CD8-positive, alpha-beta T cell (primary cell): ENCODE measurements at regions of chr1 and their contacts with region 1.

Region 1: DNA sequence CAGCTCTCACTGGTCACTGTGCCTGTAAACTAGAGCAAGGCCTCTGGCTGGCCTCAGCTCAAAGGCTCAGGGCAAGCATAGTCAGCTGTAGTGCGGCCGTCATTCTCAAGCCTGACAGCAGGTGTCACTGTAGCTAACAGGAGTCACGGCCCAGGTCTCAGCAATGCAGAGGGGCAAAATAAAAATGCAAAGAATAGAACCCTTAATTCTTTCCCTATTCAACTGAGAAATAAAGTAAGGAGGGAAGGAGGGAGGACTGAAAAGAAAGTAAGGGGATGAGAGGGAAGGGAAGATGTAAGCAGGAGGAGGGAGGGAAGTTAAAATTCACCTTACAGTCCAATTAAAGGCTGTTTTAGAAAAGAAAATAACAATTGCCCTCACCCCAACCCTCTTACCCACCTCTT is 106.1 kb downstream of the KIAA0319L start:
- DNase-seq: peak; percentile 62 to 85 (median 79)
- ATAC-seq: peak; percentile 94
- H3K4me3 ChIP-seq: no peak overlapping the region
- H3K4me3 Mint-ChIP-seq: no peak overlapping the region
- H3K27ac ChIP-seq: no peak overlapping the region
- H3K27ac Mint-ChIP-seq: peak overlapping the region; percentile 85
- H3K4me1 ChIP-seq: peaks cover 14% of the 10 kb centered on the region
- H3K4me1 Mint-ChIP-seq: peaks cover 27% of the 10 kb centered on the region
- H3K27me3 ChIP-seq: no peaks in the 10 kb centered on the region
- H3K27me3 Mint-ChIP-seq: no peaks in the 10 kb centered on the region
- CTCF ChIP-seq: peak; percentile 82

Region 2: GRCh38 chr1:35470977-35471613 is 20.0 kb after region 1 on chr1:
- CTCF ChIA-PET with region 1: interaction called, 13 read pairs
- POLR2A ChIA-PET with region 1: interaction called, 3 read pairs
- intact Hi-C with region 1: no loop called
- DNase-seq: no peak
- ATAC-seq: no peak
- H3K4me3 ChIP-seq: no peak overlapping the region
- H3K4me3 Mint-ChIP-seq: no peak overlapping the region
- H3K27ac ChIP-seq: no peak overlapping the region
- H3K27ac Mint-ChIP-seq: no peak overlapping the region
- H3K4me1 ChIP-seq: no peaks in the 10 kb centered on the region
- H3K4me1 Mint-ChIP-seq: peaks cover 4% of the 10 kb centered on the region
- H3K27me3 ChIP-seq: no peaks in the 10 kb centered on the region
- H3K27me3 Mint-ChIP-seq: no peaks in the 10 kb centered on the region
- CTCF ChIP-seq: no peak

Region 3: DNA sequence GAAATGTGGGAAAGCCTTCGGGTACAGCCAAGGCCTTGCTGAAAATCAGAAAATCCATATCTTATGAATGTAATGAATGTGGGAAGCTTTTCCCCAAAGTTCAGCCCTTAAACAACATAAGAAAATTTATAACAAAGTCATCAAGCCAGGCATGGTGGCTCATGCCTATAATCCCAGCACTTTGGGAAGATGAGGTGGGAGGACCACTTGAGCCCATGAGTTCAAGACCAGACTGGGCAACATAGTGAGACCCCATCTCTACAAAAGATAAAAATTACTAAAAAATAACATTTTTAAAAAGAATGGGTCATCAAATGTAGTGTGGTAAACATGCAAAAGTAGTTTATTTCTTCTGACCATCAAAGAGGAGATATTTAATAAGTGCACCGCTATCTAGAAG is 60.2 kb after region 1 on chr1:
- CTCF ChIA-PET with region 1: interaction called, 29 read pairs
- POLR2A ChIA-PET with region 1: interaction called, 4 read pairs
- intact Hi-C with region 1: loop called (anchors 2 to 5 kb)
- DNase-seq: no peak
- ATAC-seq: no peak
- H3K4me3 ChIP-seq: no peak overlapping the region
- H3K4me3 Mint-ChIP-seq: no peak overlapping the region
- H3K27ac ChIP-seq: no peak overlapping the region
- H3K27ac Mint-ChIP-seq: no peak overlapping the region
- H3K4me1 ChIP-seq: peaks cover 21% of the 10 kb centered on the region
- H3K4me1 Mint-ChIP-seq: peaks cover 57% of the 10 kb centered on the region
- H3K27me3 ChIP-seq: no peaks in the 10 kb centered on the region
- H3K27me3 Mint-ChIP-seq: no peaks in the 10 kb centered on the region
- CTCF ChIP-seq: no peak

Region 4: DNA sequence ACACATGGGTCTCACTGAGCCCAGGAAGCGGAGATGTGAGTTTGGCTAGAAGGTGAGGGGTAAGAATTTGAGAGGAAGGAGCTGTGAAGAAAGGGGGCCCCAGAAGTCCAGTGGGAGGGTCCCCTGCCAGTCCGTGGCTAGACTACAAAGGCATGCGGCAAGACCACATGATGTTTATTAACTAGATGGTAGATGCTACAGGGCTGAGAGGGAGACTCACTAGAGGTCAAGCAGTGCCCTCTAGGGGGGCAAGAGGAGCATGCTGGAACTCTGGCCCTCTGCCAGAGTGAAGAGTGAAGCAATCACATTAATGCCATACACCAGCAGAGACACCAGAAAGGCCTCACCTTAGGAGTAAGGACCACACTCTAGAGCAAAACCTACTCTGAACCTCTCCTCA is 93.9 kb after region 1 on chr1:
- CTCF ChIA-PET with region 1: interaction called, 116 read pairs
- POLR2A ChIA-PET with region 1: interaction called, 4 read pairs
- intact Hi-C with region 1: loop called (anchors 1 kb)
- DNase-seq: peak in 7 of 9 experiments; percentile 37 to 83 (median 70)
- ATAC-seq: peak; percentile 88
- H3K4me3 ChIP-seq: no peak overlapping the region
- H3K4me3 Mint-ChIP-seq: no peak overlapping the region
- H3K27ac ChIP-seq: no peak overlapping the region
- H3K27ac Mint-ChIP-seq: peak overlapping the region; percentile 20
- H3K4me1 ChIP-seq: peaks cover 35% of the 10 kb centered on the region
- H3K4me1 Mint-ChIP-seq: peaks cover 77% of the 10 kb centered on the region
- H3K27me3 ChIP-seq: no peaks in the 10 kb centered on the region
- H3K27me3 Mint-ChIP-seq: no peaks in the 10 kb centered on the region
- CTCF ChIP-seq: peak; percentile 57

Region 5: DNA sequence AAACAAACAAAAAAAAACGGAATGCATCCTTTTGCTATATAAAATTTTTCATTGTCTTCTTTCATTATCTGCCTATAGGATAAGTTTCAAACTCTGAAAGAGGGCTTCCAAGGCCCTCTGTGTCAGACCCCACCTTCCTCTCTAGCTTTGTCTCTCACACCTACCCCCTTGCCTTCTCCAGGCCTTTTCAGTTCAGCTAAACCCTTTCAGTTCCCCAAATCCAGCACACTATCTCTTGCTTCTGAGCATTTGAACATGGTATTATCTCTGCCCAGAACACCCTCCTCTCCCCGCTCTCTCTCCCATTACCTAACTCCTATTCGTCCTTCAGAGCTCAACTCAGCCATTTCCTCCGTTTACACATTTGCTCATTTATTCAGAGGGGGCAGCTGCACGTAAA is 231.9 kb after region 1 on chr1:
- CTCF ChIA-PET with region 1: no interaction called
- POLR2A ChIA-PET with region 1: no interaction called
- intact Hi-C with region 1: no loop called
- DNase-seq: no peak
- ATAC-seq: no peak
- H3K4me3 ChIP-seq: no peak overlapping the region
- H3K4me3 Mint-ChIP-seq: no peak overlapping the region
- H3K27ac ChIP-seq: no peak overlapping the region
- H3K27ac Mint-ChIP-seq: no peak overlapping the region
- H3K4me1 ChIP-seq: no peaks in the 10 kb centered on the region
- H3K4me1 Mint-ChIP-seq: no peaks in the 10 kb centered on the region
- H3K27me3 ChIP-seq: no peaks in the 10 kb centered on the region
- H3K27me3 Mint-ChIP-seq: peaks cover 20% of the 10 kb centered on the region
- CTCF ChIP-seq: no peak

Region 6: GRCh38 chr1:35715568-35716002 is 264.5 kb after region 1 on chr1:
- CTCF ChIA-PET with region 1: interaction called, 21 read pairs
- POLR2A ChIA-PET with region 1: no interaction called
- intact Hi-C with region 1: no loop called
- DNase-seq: peak; percentile 57 to 85 (median 79)
- ATAC-seq: peak; percentile 63
- H3K4me3 ChIP-seq: no peak overlapping the region
- H3K4me3 Mint-ChIP-seq: peak overlapping the region; percentile 24
- H3K27ac ChIP-seq: no peak overlapping the region
- H3K27ac Mint-ChIP-seq: no peak overlapping the region
- H3K4me1 ChIP-seq: peaks cover 10% of the 10 kb centered on the region
- H3K4me1 Mint-ChIP-seq: peaks cover 30% of the 10 kb centered on the region
- H3K27me3 ChIP-seq: no peaks in the 10 kb centered on the region
- H3K27me3 Mint-ChIP-seq: no peaks in the 10 kb centered on the region
- CTCF ChIP-seq: peak; percentile 89

Region 7: DNA sequence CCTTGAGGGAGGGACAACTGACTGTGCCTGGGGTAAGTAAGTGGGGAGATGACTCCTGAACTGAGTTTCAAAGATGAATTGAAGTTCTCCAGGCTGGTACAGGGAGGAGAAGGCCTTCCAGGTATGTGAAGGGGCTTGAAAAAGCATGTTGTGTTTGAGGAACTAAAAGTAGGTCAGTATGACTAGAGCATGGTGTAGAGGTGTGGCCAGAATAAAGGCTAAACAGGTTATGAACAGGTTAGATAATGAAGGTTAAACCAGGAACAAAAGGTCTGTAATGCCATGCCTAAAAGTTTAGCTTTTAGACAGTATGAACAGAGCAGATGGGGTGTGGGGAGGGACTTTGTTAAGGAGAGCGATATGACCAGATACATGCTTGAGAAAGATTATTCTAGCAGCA is 326.0 kb after region 1 on chr1:
- CTCF ChIA-PET with region 1: interaction called, 16 read pairs
- POLR2A ChIA-PET with region 1: no interaction called
- intact Hi-C with region 1: loop called (anchors 1 to 2 kb)
- DNase-seq: no peak
- ATAC-seq: no peak
- H3K4me3 ChIP-seq: no peak overlapping the region
- H3K4me3 Mint-ChIP-seq: no peak overlapping the region
- H3K27ac ChIP-seq: no peak overlapping the region
- H3K27ac Mint-ChIP-seq: peak overlapping the region; percentile 8
- H3K4me1 ChIP-seq: peaks cover 5% of the 10 kb centered on the region
- H3K4me1 Mint-ChIP-seq: peaks cover 8% of the 10 kb centered on the region
- H3K27me3 ChIP-seq: no peaks in the 10 kb centered on the region
- H3K27me3 Mint-ChIP-seq: no peaks in the 10 kb centered on the region
- CTCF ChIP-seq: no peak